ENCODE measurements at regions of chr5 and their contacts with region 1.

Region 1: GRCh38 chr5:7754992-7755596 is 95.8 kb downstream of the CFAP90 start:
- DNase-seq: peak; percentile 24
- H3K4me3 ChIP-seq: no peak overlapping the region
- H3K27ac ChIP-seq: no peak overlapping the region
- H3K4me1 ChIP-seq: no peaks in the 10 kb centered on the region
- H3K27me3 ChIP-seq: no peaks in the 10 kb centered on the region
- CTCF ChIP-seq: peak; percentile 75 to 86

Region 2: DNA sequence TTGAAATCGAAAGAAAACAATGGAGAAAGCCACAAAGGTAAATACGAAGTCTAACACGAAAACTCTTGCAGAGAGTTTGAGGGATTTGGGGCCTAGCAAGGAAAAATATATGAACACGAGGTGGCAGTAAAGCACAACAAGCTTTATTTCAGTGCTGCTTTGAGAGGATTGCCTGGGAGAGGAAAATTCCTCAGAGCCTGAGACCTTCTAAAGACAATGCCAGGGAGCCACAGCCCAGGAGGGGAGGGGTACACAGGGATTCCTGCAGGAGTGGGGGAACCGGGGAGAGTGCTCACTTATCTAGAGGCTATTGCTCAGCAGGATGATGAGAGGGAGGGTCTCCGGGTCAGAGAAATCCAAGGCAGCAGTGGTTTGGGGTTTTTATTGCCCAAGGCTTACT is 494.0 kb before region 1 on chr5:
- CTCF ChIA-PET with region 1: no interaction called
- dilution Hi-C with region 1: no loop called
- in situ Hi-C with region 1: no loop called
- intact Hi-C with region 1: loop called (anchors 2 kb)
- DNase-seq: no peak
- H3K4me3 ChIP-seq: no peak overlapping the region
- H3K27ac ChIP-seq: no peak overlapping the region
- H3K4me1 ChIP-seq: no peaks in the 10 kb centered on the region
- H3K27me3 ChIP-seq: no peaks in the 10 kb centered on the region
- CTCF ChIP-seq: peak in 1 of 2 donors; percentile 36

Region 3: DNA sequence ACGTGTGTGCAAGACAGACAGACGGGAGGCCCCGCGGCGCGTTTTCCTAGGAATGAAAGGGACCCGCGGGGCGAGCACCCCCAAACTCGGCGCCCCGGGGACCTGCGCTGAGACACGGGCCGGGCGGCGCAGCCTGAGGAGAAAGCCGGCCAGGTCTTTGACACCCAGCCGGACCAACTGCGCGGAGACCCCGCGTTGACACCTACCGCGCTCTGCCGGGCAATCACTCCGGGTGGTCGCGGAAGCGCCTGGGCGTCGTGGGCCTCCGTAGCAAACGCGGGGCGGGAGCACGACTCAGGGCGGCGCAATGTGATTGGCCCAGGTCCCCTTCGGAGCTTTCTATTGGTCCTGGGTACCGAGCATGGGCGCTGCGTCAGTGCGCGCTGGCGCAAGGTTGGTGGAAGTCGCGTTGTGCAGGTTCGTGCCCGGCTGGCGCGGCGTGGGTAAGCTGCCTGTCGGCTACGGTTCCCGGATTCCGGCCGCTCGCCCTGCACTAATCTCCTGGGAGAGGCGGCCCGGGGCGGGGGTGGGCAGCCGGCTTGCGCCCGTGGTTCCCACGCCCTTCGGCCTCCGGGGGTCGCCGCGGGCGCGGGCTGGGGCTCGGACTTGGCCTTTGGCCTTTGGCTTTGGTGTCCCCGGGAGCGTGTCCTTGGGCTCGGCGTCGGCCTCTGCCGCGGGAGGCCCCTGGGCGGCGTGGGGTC is 113.8 kb after region 1 on chr5 and contains the starts of genes FASTKD3 and MTRR:
- CTCF ChIA-PET with region 1: no interaction called
- dilution Hi-C with region 1: no loop called
- in situ Hi-C with region 1: no loop called
- intact Hi-C with region 1: no loop called
- DNase-seq: peak; percentile 89
- H3K4me3 ChIP-seq: peak within 1 kb of the TSS; percentile 87 to 97 (median 92)
- H3K27ac ChIP-seq: peak within 1 kb of the TSS; percentile 74
- H3K4me1 ChIP-seq: peaks cover 16% of the 10 kb centered on the region
- H3K27me3 ChIP-seq: no peaks in the 10 kb centered on the region
- CTCF ChIP-seq: no peak
- total RNA-seq, gene FASTKD3: 7.5 to 18.0 TPM
- total RNA-seq, gene MTRR: 36.3 to 52.9 TPM